ENCODE measurements at regions of chr4 and their contacts with region 1.

Region 1: GRCh38 chr4:55303818-55304217 is 42.2 kb upstream of the SRD5A3 start:
- DNase-seq: no peak
- ATAC-seq: no peak
- H3K4me3 ChIP-seq: no peak overlapping the region
- H3K4me3 Mint-ChIP-seq: no peak overlapping the region
- H3K27ac ChIP-seq: no peak overlapping the region
- H3K27ac Mint-ChIP-seq: no peak overlapping the region
- H3K4me1 ChIP-seq: no peaks in the 10 kb centered on the region
- H3K4me1 Mint-ChIP-seq: no peaks in the 10 kb centered on the region
- H3K27me3 ChIP-seq: peaks cover 0 to 3% of the 10 kb centered on the region in 2 experiments
- H3K27me3 Mint-ChIP-seq: peaks cover 2 to 18% of the 10 kb centered on the region in 2 donors

Region 2: DNA sequence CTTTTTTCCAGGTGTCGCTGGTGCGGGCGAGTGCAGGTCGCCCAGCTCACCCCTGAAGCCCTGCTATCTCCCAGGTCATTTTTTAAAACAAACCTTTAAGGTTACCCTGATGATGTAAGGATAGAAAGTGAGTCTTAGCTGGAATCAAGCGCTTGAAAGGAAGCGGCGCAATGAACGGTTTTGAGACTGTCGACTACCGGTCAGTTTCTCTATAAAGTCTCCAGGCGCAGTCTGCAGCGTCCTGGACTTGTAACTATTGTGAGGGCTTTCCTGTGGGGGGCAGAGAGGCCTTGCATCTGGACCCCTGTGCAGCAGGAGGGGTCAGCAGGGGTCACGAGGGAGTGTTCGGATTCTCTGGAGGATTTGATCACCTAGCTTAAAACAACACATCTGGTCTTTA is 644.5 kb before region 1 on chr4:
- CTCF ChIA-PET with region 1: interaction called in 1 of 2 experiments, 16 read pairs
- POLR2A ChIA-PET with region 1: no interaction called
- DNase-seq: no peak
- ATAC-seq: no peak
- H3K4me3 ChIP-seq: peak overlapping the region; percentile 43 to 89
- H3K4me3 Mint-ChIP-seq: peak overlapping the region; percentile 70 to 83 (median 75)
- H3K27ac ChIP-seq: no peak overlapping the region
- H3K27ac Mint-ChIP-seq: no peak overlapping the region
- H3K4me1 ChIP-seq: peaks cover 8 to 25% of the 10 kb centered on the region in 2 experiments
- H3K4me1 Mint-ChIP-seq: peaks cover 15 to 18% (median 17%) of the 10 kb centered on the region in 3 donors
- H3K27me3 ChIP-seq: peaks cover 0 to 35% of the 10 kb centered on the region in 2 experiments
- H3K27me3 Mint-ChIP-seq: peaks cover 48 to 67% of the 10 kb centered on the region in 2 donors

Region 3: GRCh38 chr4:56400560-56400959 is 1096.7 kb after region 1 on chr4:
- CTCF ChIA-PET with region 1: no interaction called
- POLR2A ChIA-PET with region 1: no interaction called
- DNase-seq: no peak
- ATAC-seq: no peak
- H3K4me3 ChIP-seq: no peak overlapping the region
- H3K4me3 Mint-ChIP-seq: no peak overlapping the region
- H3K27ac ChIP-seq: no peak overlapping the region
- H3K27ac Mint-ChIP-seq: no peak overlapping the region
- H3K4me1 ChIP-seq: no peaks in the 10 kb centered on the region
- H3K4me1 Mint-ChIP-seq: no peaks in the 10 kb centered on the region
- H3K27me3 ChIP-seq: no peaks in the 10 kb centered on the region
- H3K27me3 Mint-ChIP-seq: no peaks in the 10 kb centered on the region